Mammary epithelial cell (primary cell): ENCODE measurements at regions of chr4 and their contacts with region 1.

Region 1: GRCh38 chr4:77172336-77172735 is 15.3 kb downstream of the CCNG2 start:
- DNase-seq: peak; percentile 91
- H3K4me3 ChIP-seq: no peak overlapping the region
- H3K27ac ChIP-seq: peak overlapping the region; percentile 91
- H3K4me1 ChIP-seq: peaks cover 58% of the 10 kb centered on the region
- H3K27me3 ChIP-seq: no peaks in the 10 kb centered on the region
- CTCF ChIP-seq: no peak

Region 2: DNA sequence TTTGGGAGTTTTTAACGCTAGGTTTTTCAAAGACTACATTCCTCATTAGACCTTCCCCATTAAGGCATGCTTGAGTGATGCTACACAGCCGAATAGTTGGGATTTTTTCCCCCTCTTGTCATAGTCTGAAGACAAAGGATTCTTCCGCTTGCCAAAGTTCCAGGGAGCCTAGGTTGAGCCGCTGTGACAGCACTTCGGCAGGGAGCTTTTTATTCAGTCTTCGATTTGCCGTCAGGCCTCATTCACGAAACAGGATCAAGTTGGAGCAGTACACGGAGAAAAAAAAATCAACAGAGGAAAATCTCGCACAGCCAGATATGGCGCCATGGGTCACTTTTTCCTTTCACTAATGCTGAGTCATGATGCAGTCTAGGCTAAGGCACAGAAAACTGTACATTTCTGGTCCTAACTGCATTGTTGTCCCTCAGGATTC is 713.0 kb before region 1 on chr4:
- CTCF ChIA-PET with region 1: interaction called, 10 read pairs
- dilution Hi-C with region 1: no loop called
- in situ Hi-C with region 1: no loop called
- intact Hi-C with region 1: no loop called
- DNase-seq: peak; percentile 5
- H3K4me3 ChIP-seq: no peak overlapping the region
- H3K27ac ChIP-seq: peak overlapping the region; percentile 78
- H3K4me1 ChIP-seq: peaks cover 20% of the 10 kb centered on the region
- H3K27me3 ChIP-seq: no peaks in the 10 kb centered on the region
- CTCF ChIP-seq: no peak